Activated CD4-positive, alpha-beta T cell treated with anti-CD3 and anti-CD28 coated beads for 36 hours (primary cell): ENCODE measurements at regions of chr5 and their contacts with region 1.

Region 1: DNA sequence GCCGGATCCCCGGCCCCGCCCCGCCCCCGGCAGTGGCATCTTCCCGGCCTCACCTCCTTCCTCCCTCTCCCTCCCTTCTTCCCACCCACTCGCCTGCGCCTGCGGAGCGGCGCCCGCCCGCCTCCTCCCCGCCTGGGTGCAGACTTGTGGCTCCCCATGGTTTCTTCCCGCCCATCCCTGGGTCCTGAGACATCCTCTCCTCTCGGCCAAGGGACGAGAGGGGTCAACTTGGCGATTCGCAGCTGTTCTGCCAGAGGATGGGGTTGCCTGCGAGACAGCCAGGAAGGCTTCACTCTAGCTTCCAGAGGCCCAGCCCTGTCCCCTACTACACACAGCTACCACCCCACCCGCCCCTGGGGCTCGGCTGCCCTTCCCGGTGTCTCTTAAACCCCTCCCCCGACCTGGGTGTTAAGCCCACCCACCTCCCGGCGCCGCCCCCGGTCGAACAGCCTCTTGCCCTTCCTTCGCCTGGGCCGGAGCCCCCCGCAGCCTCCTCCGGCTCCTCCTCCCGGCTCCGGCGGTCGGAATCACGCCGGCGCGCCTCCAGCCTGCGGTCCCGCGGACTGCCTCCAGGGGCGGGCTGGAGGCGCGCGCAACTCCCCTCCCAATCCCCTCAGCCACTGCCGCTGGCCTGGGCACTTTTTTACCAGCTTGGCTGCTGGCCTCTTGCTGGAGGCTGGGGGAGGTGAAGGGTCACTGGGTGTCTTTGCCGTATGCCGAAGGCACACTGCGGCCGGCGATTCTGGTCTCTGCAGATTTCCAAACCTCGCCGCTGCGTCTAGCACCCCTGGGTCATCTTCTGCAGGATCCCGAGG is 1.9 kb downstream of the JADE2 start:
- DNase-seq: peak; percentile 87
- ATAC-seq: peak; percentile 51
- H3K4me3 Mint-ChIP-seq: peak overlapping the region; percentile 99
- H3K27ac Mint-ChIP-seq: peak overlapping the region; percentile 89
- H3K4me1 Mint-ChIP-seq: peaks cover 49% of the 10 kb centered on the region
- H3K27me3 Mint-ChIP-seq: no peaks in the 10 kb centered on the region

Region 2: GRCh38 chr5:133842846-133843611 is 684.3 kb before region 1 on chr5:
- CTCF ChIA-PET with region 1: no interaction called
- POLR2A ChIA-PET with region 1: no interaction called
- intact Hi-C with region 1: no loop called
- DNase-seq: no peak
- ATAC-seq: no peak
- H3K4me3 Mint-ChIP-seq: no peak overlapping the region
- H3K27ac Mint-ChIP-seq: no peak overlapping the region
- H3K4me1 Mint-ChIP-seq: peaks cover under 1% of the 10 kb centered on the region
- H3K27me3 Mint-ChIP-seq: peaks cover 3% of the 10 kb centered on the region

Region 3: GRCh38 chr5:134004592-134005375 is 522.6 kb before region 1 on chr5 and contains the start of gene VDAC1:
- CTCF ChIA-PET with region 1: no interaction called
- POLR2A ChIA-PET with region 1: no interaction called
- intact Hi-C with region 1: loop called (anchors 5 to 10 kb)
- DNase-seq: peak; percentile 92
- ATAC-seq: peak; percentile 85
- H3K4me3 Mint-ChIP-seq: peak within 1 kb of the TSS; percentile 94
- H3K27ac Mint-ChIP-seq: peak within 1 kb of the TSS; percentile 98
- H3K4me1 Mint-ChIP-seq: peaks cover 44% of the 10 kb centered on the region
- H3K27me3 Mint-ChIP-seq: no peaks in the 10 kb centered on the region
- total RNA-seq, gene VDAC1: 482 to 486 TPM

Region 4: GRCh38 chr5:134304311-134304710 is 223.0 kb before region 1 on chr5:
- CTCF ChIA-PET with region 1: interaction called, 5 read pairs
- POLR2A ChIA-PET with region 1: no interaction called
- intact Hi-C with region 1: loop called in 1 of 2 experiments (anchors 5 kb)
- DNase-seq: no peak
- ATAC-seq: no peak
- H3K4me3 Mint-ChIP-seq: no peak overlapping the region
- H3K27ac Mint-ChIP-seq: no peak overlapping the region
- H3K4me1 Mint-ChIP-seq: no peaks in the 10 kb centered on the region
- H3K27me3 Mint-ChIP-seq: no peaks in the 10 kb centered on the region

Region 5: GRCh38 chr5:134465816-134466240 is 61.5 kb before region 1 on chr5:
- CTCF ChIA-PET with region 1: interaction called, 4 read pairs
- POLR2A ChIA-PET with region 1: interaction called, 3 read pairs
- intact Hi-C with region 1: loop called (anchors 1 kb)
- DNase-seq: peak; percentile 77
- ATAC-seq: peak; percentile 90
- H3K4me3 Mint-ChIP-seq: peak overlapping the region; percentile 74
- H3K27ac Mint-ChIP-seq: peak overlapping the region; percentile 71
- H3K4me1 Mint-ChIP-seq: peaks cover 14% of the 10 kb centered on the region
- H3K27me3 Mint-ChIP-seq: no peaks in the 10 kb centered on the region

Region 6: DNA sequence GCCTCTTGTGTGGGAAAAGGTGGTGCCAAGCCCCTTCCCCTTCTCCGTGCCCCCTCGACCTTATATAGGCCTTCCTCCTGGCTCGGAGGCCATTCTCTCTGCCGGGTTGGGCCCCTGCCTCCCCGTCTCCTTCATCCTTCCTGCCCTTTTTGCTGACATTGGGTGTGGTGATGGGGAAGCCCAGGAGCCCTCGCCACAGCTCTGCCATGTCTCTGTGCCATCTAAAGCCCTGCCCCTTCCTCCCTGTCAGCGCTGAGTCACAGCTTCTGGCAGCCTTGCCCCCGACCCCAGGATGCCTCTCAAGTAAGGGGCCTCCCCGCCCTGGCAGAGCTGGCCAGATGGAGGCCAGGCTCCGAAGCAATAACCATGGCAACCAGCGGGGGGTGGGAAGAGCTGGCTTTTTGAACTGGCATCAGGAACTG is 28.5 kb after region 1 on chr5:
- CTCF ChIA-PET with region 1: interaction called, 15 read pairs
- POLR2A ChIA-PET with region 1: interaction called, 5 read pairs
- intact Hi-C with region 1: loop called (anchors 1 kb)
- DNase-seq: peak; percentile 96
- ATAC-seq: peak; percentile 97
- H3K4me3 Mint-ChIP-seq: peak overlapping the region; percentile 72
- H3K27ac Mint-ChIP-seq: peak overlapping the region; percentile 99
- H3K4me1 Mint-ChIP-seq: peaks cover 38% of the 10 kb centered on the region
- H3K27me3 Mint-ChIP-seq: no peaks in the 10 kb centered on the region

Region 7: GRCh38 chr5:134648425-134649162 is 121.2 kb after region 1 on chr5 and contains the start of gene SEC24A:
- CTCF ChIA-PET with region 1: no interaction called
- POLR2A ChIA-PET with region 1: interaction called, 4 read pairs
- intact Hi-C with region 1: loop called (anchors 1 to 2 kb)
- DNase-seq: peak; percentile 96
- ATAC-seq: peak; percentile 88
- H3K4me3 Mint-ChIP-seq: peak within 1 kb of the TSS; percentile 87
- H3K27ac Mint-ChIP-seq: peak within 1 kb of the TSS; percentile 99
- H3K4me1 Mint-ChIP-seq: peaks cover 30% of the 10 kb centered on the region
- H3K27me3 Mint-ChIP-seq: no peaks in the 10 kb centered on the region
- total RNA-seq, gene SEC24A: 32.2 to 41.3 TPM

Region 8: DNA sequence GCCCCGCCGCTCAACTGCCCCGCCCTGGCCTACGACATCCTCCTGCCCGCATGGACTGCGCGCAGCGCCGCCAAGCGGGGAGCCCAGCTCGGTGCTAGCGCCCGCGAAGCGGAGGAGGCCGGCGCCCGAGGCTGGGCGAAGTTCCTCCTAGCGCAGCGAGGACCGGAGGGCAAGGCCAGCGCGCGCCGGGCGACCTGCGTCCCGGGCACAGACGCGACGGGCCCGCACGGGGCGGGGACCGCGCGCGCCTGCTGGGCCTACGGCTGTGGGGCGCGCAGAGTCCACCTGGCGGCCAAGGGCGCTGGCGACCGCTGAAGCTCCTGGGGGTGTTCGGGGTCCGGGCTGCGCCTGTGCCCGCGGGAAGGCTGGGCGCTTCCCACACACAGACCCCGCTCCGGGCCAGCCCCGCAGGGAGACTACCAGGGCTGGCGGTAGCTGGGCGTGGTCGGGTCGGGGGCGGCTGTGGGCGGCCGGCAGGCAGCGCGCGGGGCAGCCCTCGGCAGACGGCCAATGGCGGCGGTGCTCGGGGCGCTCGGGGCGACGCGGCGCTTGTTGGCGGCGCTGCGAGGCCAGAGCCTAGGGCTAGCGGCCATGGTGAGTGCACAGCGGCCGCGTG is 377.4 kb after region 1 on chr5 and contains the start of gene PCBD2:
- CTCF ChIA-PET with region 1: no interaction called
- POLR2A ChIA-PET with region 1: no interaction called
- intact Hi-C with region 1: loop called in 1 of 2 experiments (anchors 10 kb)
- DNase-seq: peak; percentile 97
- ATAC-seq: peak; percentile 89
- H3K4me3 Mint-ChIP-seq: peak within 1 kb of the TSS; percentile 95
- H3K27ac Mint-ChIP-seq: peak within 1 kb of the TSS; percentile 98
- H3K4me1 Mint-ChIP-seq: peaks cover 17% of the 10 kb centered on the region
- H3K27me3 Mint-ChIP-seq: no peaks in the 10 kb centered on the region
- total RNA-seq, gene PCBD2: 10.0 to 12.8 TPM